GM12878 (cell line): ENCODE measurements at regions of chr16 and their contacts with region 1.

Region 1: GRCh38 chr16:75203667-75204409 is 3.1 kb downstream of the CTRB2 start:
- DNase-seq: no peak
- ATAC-seq: no peak
- H3K4me3 ChIP-seq: no peak overlapping the region
- H3K27ac ChIP-seq: no peak overlapping the region
- H3K4me1 ChIP-seq: peaks cover 8% of the 10 kb centered on the region
- H3K27me3 ChIP-seq: no peaks in the 10 kb centered on the region
- CTCF ChIP-seq: no peak
- EP300 ChIP-seq: no peak
- POLR2A ChIP-seq: no peak
- RAD21 ChIP-seq: no peak

Region 2: DNA sequence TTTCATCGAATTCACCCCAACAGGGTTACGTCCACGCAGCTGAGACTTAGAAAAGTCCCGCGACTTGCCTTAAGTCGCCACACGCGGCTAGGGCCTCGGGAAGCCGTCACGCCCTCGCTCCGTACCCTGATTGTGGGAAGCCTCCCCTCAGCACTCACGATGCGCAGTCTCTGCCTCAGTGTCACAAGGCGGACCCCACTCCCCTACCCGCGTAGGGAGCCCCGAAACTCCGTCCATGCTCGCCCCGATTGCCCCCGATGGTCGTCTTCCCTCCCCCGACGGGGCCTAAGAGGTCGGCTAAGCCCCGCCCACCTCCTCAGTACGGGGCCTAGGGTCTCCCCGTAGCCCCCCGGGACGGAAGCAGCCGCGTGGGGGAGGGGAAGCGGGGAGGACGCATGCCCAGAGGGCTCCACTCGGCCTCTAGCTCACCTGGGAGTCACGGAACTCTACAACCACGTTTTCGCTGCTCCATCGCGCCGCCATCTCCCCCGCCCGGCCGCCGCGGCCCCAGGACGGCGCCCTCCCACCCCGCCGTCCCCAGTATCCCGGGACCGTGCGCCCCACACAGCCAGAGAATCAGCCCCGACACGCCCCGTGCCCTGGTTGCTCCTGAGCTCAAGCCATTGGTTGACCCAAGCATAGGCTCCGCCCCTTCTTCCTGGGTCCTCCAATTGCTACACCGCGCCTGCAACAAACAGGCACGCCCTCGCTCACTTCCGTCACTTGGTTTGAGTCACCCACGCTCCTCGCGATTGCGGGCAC is 219.1 kb before region 1 on chr16 and contains the start of gene WDR59:
- CTCF ChIA-PET with region 1: no interaction called
- POLR2A ChIA-PET with region 1: no interaction called
- RAD21 ChIA-PET with region 1: no interaction called
- SMC1A ChIA-PET with region 1: no interaction called
- in situ Hi-C with region 1: no loop called
- intact Hi-C with region 1: no loop called
- DNase-seq: peak; percentile 96
- ATAC-seq: peak; percentile 99
- H3K4me3 ChIP-seq: peak within 1 kb of the TSS; percentile 99
- H3K27ac ChIP-seq: peak within 1 kb of the TSS; percentile 92
- H3K4me1 ChIP-seq: no peaks in the 10 kb centered on the region; the same call in 1 of the 2 replicates
- H3K27me3 ChIP-seq: no peaks in the 10 kb centered on the region
- CTCF ChIP-seq: no peak
- EP300 ChIP-seq: no peak
- POLR2A ChIP-seq: peak; percentile 83
- RAD21 ChIP-seq: no peak
- polyA plus RNA-seq, gene WDR59: 9.7 to 11.5 TPM

Region 3: DNA sequence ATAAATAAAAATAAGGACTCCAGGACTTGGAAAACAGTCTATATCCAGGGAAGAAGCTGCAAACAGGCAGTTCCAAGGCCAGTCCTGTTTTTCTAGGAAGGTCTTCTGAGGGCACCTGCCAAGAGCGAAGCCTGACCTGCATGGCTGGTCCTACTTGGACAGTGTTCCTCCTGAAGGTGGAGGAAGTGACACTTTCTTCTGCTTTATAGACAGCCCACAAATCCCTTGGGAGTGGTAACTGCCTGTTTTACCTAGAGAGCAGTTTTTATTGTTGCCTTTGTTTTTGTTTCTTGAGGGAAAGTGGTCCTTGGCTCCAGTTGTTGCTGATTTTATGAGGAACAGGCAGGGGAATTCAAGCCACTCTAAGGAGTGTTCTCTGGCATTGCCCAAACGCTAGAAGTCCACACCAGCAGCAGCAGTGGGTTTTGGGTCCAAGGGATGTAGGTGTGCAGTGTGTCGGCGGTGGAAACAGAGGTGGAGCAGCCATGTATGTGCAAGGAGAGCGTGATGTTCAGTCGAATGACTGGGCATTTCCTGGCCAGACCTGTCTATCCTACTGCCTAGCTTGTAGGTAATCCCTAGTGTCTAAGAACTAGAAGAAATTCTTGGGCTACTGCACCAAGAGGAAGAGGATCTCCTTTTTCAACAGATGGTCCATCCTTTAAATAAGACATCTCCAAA is 122.5 kb before region 1 on chr16:
- CTCF ChIA-PET with region 1: no interaction called
- POLR2A ChIA-PET with region 1: no interaction called
- RAD21 ChIA-PET with region 1: no interaction called
- SMC1A ChIA-PET with region 1: no interaction called
- in situ Hi-C with region 1: no loop called
- intact Hi-C with region 1: no loop called
- DNase-seq: no peak
- ATAC-seq: peak; percentile 58
- H3K4me3 ChIP-seq: no peak overlapping the region
- H3K27ac ChIP-seq: no peak overlapping the region
- H3K4me1 ChIP-seq: peaks cover 9% of the 10 kb centered on the region
- H3K27me3 ChIP-seq: no peaks in the 10 kb centered on the region
- CTCF ChIP-seq: no peak
- EP300 ChIP-seq: no peak
- POLR2A ChIP-seq: no peak
- RAD21 ChIP-seq: no peak

Region 4: GRCh38 chr16:75218256-75219070 is 14.6 kb after region 1 on chr16 and contains the start of gene CTRB1:
- CTCF ChIA-PET with region 1: interaction called, 11 read pairs
- POLR2A ChIA-PET with region 1: no interaction called
- RAD21 ChIA-PET with region 1: interaction called, 7 read pairs
- SMC1A ChIA-PET with region 1: interaction called, 9 read pairs
- in situ Hi-C with region 1: no loop called
- intact Hi-C with region 1: loop called (anchors 2 kb)
- DNase-seq: no peak
- ATAC-seq: peak; percentile 79
- H3K4me3 ChIP-seq: no peak within 1 kb of the TSS
- H3K27ac ChIP-seq: peak within 1 kb of the TSS; percentile 20; the same call in 1 of the 2 replicates
- H3K4me1 ChIP-seq: peaks cover 20% of the 10 kb centered on the region
- H3K27me3 ChIP-seq: no peaks in the 10 kb centered on the region
- CTCF ChIP-seq: no peak
- EP300 ChIP-seq: no peak; a peak in 1 of 4 replicates
- POLR2A ChIP-seq: peak; percentile 52; the same call in 1 of the 2 replicates
- RAD21 ChIP-seq: no peak
- polyA plus RNA-seq, gene CTRB1: not detected

Region 5: DNA sequence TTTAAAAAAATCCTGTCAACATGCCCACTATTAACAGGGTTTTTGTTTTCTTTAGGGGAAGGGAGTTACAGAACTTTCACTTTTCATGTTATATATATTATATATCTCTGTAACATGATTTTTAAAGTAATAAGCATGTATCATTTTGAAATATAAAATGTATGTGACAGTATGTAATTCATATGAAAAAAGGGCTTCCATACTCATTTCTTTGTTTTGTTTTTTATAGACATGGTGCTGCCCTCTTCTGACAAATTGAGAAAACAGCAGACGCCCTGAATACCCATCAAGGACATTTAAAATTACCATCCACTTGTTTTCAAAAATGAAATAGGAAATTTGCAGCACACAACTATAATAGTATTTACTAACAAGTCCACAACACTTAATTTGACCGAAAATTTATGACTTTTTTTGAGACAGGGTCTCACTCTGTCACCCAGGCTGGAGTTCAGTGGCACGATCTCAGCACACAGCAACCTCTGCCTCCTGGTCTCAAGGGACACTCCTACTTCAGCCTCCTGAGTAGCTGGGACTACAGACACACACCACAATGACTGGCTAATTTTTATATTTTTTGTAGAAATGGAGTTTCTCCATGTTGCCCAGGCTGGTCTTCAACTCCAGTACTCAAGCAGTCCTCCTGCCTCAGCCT is 199.1 kb after region 1 on chr16:
- CTCF ChIA-PET with region 1: interaction called, 85 read pairs
- POLR2A ChIA-PET with region 1: interaction called, 6 read pairs
- RAD21 ChIA-PET with region 1: interaction called, 44 read pairs
- SMC1A ChIA-PET with region 1: interaction called, 28 read pairs
- in situ Hi-C with region 1: no loop called
- intact Hi-C with region 1: loop called (anchors 1 kb)
- DNase-seq: no peak
- ATAC-seq: peak; percentile 59; the same call in 2 of the 3 replicates
- H3K4me3 ChIP-seq: no peak overlapping the region
- H3K27ac ChIP-seq: no peak overlapping the region
- H3K4me1 ChIP-seq: no peaks in the 10 kb centered on the region
- H3K27me3 ChIP-seq: no peaks in the 10 kb centered on the region
- CTCF ChIP-seq: peak; percentile 45 to 60 (median 55); a peak in 5 of 6 replicates
- EP300 ChIP-seq: no peak
- POLR2A ChIP-seq: no peak
- RAD21 ChIP-seq: peak; percentile 59